ENCODE measurements at regions of chr11 and their contacts with region 1.

Region 1: DNA sequence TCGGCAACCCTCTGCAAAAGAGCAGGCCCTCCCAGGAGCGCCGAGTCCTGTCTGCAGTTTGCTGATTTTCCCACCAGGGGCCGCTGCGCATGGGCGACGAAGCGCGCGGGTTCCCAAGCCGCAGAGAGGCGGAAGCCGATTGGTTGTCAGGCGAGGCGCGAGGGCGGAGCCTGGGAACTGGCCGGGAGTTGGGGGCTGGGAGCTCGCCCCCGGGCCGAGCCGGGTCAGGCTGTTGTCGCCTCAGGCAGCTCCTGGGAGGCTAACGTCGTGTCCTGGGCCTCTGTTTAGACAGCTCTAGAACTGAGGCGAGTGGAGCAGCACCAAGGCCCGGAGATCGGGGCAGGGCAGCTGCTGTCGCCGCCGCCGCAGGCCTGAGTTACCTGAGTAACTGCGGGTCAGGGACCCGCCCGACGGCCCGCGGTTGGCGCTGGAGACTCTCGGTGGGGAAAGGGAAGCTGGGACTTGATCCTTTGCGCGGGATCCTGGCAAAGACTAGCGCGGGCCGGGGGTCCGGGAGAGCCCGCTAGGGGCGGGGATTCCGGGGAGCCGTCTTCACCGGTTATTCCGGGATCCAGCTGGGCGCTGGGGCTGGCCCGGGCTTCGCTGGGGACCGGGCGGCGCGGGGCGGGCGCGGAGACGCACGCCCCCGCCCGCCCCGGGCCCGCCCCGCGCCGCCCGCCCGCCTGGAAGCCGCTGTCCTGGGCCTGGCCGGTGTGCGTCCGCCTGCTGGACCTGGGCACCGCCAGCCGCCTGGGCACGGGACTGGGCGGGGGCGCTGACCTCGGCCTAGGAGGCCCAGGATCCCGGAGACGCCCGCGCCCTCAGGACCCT is at the start of gene STIM1:
- DNase-seq: peak; percentile 88
- ATAC-seq: peak; percentile 96
- H3K4me3 ChIP-seq: peak within 1 kb of the TSS; percentile 67 to 86
- H3K27ac ChIP-seq: peak within 1 kb of the TSS; percentile 87
- H3K4me1 ChIP-seq: peaks cover 42% of the 10 kb centered on the region
- H3K27me3 ChIP-seq: no peaks in the 10 kb centered on the region
- CTCF ChIP-seq: peak; percentile 100
- total RNA-seq, gene STIM1: 93.6 TPM

Region 2: GRCh38 chr11:3123761-3124733 is 731.1 kb before region 1 on chr11:
- CTCF ChIA-PET with region 1: no interaction called
- POLR2A ChIA-PET with region 1: no interaction called
- in situ Hi-C with region 1: no loop called
- intact Hi-C with region 1: no loop called
- DNase-seq: peak; percentile 76
- ATAC-seq: peak; percentile 72
- H3K4me3 ChIP-seq: no peak overlapping the region
- H3K27ac ChIP-seq: no peak overlapping the region
- H3K4me1 ChIP-seq: no peaks in the 10 kb centered on the region
- H3K27me3 ChIP-seq: no peaks in the 10 kb centered on the region
- CTCF ChIP-seq: no peak

Region 3: DNA sequence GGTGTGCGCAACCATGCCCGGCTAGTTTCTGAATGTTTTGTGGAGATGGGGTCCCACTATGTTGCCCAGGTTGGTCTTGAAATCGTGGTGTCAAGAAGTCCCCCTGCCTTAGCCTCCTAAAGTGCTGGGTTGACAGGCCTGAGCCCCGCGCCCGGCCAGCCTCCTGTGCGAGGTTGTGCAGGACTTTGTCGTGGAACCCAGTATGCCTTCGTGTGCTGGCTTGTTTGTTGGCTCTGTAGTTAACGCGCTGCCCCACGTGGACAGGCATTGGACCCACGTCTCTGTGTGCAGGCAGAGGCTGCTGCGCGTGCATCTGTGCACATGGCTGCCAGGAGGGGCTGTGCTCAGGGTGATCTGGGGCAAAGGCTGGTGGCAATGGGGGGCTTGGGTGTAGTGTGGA is 442.4 kb before region 1 on chr11:
- CTCF ChIA-PET with region 1: interaction called, 13 read pairs
- POLR2A ChIA-PET with region 1: no interaction called
- in situ Hi-C with region 1: no loop called
- intact Hi-C with region 1: loop called (anchors 10 kb)
- DNase-seq: no peak
- ATAC-seq: no peak
- H3K4me3 ChIP-seq: no peak overlapping the region
- H3K27ac ChIP-seq: no peak overlapping the region
- H3K4me1 ChIP-seq: no peaks in the 10 kb centered on the region
- H3K27me3 ChIP-seq: no peaks in the 10 kb centered on the region
- CTCF ChIP-seq: no peak

Region 4: DNA sequence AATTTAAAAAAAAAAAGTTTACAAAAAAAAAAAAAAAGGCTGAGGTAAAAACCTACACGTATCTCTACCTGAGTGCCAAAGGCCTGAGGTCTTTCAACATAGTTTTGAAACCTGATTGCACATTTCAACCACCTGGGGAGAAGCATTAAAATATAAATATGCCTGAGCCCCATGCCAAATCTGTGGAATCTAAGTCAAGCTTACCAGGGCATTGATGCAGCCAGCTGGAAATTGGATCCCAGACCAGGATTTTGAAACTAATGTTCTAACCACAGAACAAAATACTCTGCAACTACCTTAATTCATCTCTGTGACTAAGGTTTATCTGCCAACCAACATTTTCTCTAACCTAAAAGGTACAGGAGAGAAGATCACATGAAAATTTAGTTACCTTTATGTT is 145.2 kb before region 1 on chr11:
- CTCF ChIA-PET with region 1: no interaction called
- POLR2A ChIA-PET with region 1: no interaction called
- in situ Hi-C with region 1: no loop called
- intact Hi-C with region 1: no loop called
- DNase-seq: no peak
- ATAC-seq: no peak
- H3K4me3 ChIP-seq: no peak overlapping the region
- H3K27ac ChIP-seq: no peak overlapping the region
- H3K4me1 ChIP-seq: no peaks in the 10 kb centered on the region
- H3K27me3 ChIP-seq: no peaks in the 10 kb centered on the region
- CTCF ChIP-seq: no peak

Region 5: GRCh38 chr11:3732671-3733436 is 122.3 kb before region 1 on chr11:
- CTCF ChIA-PET with region 1: no interaction called
- POLR2A ChIA-PET with region 1: no interaction called
- in situ Hi-C with region 1: no loop called
- intact Hi-C with region 1: no loop called
- DNase-seq: no peak
- ATAC-seq: no peak
- H3K4me3 ChIP-seq: no peak overlapping the region
- H3K27ac ChIP-seq: no peak overlapping the region
- H3K4me1 ChIP-seq: no peaks in the 10 kb centered on the region
- H3K27me3 ChIP-seq: no peaks in the 10 kb centered on the region
- CTCF ChIP-seq: no peak

Region 6: GRCh38 chr11:3841426-3842350 is 13.5 kb before region 1 on chr11:
- CTCF ChIA-PET with region 1: interaction called, 33 read pairs
- POLR2A ChIA-PET with region 1: interaction called, 6 read pairs
- in situ Hi-C with region 1: no loop called
- intact Hi-C with region 1: no loop called
- DNase-seq: peak; percentile 82
- ATAC-seq: peak; percentile 84
- H3K4me3 ChIP-seq: peak overlapping the region; percentile 62 to 63
- H3K27ac ChIP-seq: peak overlapping the region; percentile 84
- H3K4me1 ChIP-seq: peaks cover 36% of the 10 kb centered on the region
- H3K27me3 ChIP-seq: no peaks in the 10 kb centered on the region
- CTCF ChIP-seq: peak; percentile 100

Region 7: DNA sequence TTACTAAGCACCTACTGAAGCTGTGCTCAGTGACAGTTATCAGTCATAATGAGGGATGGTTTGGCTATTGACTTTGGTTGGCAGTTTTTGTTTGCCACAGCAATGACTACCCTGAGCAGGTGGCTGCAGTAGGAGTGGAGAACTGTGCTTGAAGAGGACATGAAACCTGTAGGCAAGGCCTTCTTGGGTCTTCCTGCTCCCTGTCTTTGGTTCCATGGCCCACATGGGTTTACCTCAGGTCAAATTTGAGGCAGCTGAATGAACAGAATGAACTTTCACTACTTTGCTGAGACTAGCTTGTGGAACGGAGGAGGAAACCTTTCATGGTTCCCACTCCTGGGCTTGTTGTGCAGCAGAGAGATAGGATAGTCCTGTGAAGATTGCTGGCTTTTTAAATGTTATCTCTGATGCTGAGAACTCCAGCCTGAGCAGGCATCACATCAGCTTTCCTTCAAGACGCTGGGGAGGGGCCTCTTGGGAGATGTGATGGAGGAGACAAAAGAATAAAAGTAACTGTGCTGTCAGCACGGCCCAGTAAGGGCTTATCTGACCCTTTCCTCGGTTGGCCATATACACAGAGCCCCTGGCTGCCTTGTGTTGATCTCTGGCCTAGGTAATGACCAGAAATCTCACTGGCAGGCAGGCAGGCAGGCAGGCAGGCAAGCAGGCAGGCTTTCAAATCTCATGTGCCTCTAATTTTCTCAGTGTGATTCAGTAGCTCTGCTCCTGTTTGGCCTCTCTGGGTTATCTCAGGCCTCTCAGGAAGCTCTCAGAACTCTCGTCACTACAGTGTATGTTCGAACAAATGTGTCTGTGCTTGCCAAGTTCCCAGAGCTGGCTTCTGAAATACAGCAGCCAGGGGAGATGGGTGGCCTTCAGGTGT is 12.3 kb after region 1 on chr11:
- CTCF ChIA-PET with region 1: interaction called, 9 read pairs
- POLR2A ChIA-PET with region 1: interaction called, 17 read pairs
- in situ Hi-C with region 1: no loop called
- intact Hi-C with region 1: no loop called
- DNase-seq: no peak
- ATAC-seq: peak; percentile 15; the same call in 1 of the 2 replicates
- H3K4me3 ChIP-seq: no peak overlapping the region
- H3K27ac ChIP-seq: peak overlapping the region; percentile 4; the same call in 1 of the 2 replicates
- H3K4me1 ChIP-seq: peaks cover 25% of the 10 kb centered on the region
- H3K27me3 ChIP-seq: no peaks in the 10 kb centered on the region
- CTCF ChIP-seq: no peak

Region 8: GRCh38 chr11:3873712-3874349 is 18.6 kb after region 1 on chr11:
- CTCF ChIA-PET with region 1: interaction called, 10 read pairs
- POLR2A ChIA-PET with region 1: interaction called, 17 read pairs
- in situ Hi-C with region 1: no loop called
- intact Hi-C with region 1: no loop called
- DNase-seq: no peak
- ATAC-seq: peak; percentile 31; the same call in 1 of the 2 replicates
- H3K4me3 ChIP-seq: no peak overlapping the region
- H3K27ac ChIP-seq: no peak overlapping the region
- H3K4me1 ChIP-seq: peaks cover 17% of the 10 kb centered on the region
- H3K27me3 ChIP-seq: no peaks in the 10 kb centered on the region
- CTCF ChIP-seq: no peak

Region 9: GRCh38 chr11:3984896-3985295 is 129.7 kb after region 1 on chr11:
- CTCF ChIA-PET with region 1: no interaction called
- POLR2A ChIA-PET with region 1: no interaction called
- in situ Hi-C with region 1: no loop called
- intact Hi-C with region 1: no loop called
- DNase-seq: no peak
- ATAC-seq: no peak
- H3K4me3 ChIP-seq: no peak overlapping the region
- H3K27ac ChIP-seq: no peak overlapping the region
- H3K4me1 ChIP-seq: no peaks in the 10 kb centered on the region
- H3K27me3 ChIP-seq: no peaks in the 10 kb centered on the region
- CTCF ChIP-seq: peak; percentile 15; the same call in 1 of the 2 replicates

Region 10: DNA sequence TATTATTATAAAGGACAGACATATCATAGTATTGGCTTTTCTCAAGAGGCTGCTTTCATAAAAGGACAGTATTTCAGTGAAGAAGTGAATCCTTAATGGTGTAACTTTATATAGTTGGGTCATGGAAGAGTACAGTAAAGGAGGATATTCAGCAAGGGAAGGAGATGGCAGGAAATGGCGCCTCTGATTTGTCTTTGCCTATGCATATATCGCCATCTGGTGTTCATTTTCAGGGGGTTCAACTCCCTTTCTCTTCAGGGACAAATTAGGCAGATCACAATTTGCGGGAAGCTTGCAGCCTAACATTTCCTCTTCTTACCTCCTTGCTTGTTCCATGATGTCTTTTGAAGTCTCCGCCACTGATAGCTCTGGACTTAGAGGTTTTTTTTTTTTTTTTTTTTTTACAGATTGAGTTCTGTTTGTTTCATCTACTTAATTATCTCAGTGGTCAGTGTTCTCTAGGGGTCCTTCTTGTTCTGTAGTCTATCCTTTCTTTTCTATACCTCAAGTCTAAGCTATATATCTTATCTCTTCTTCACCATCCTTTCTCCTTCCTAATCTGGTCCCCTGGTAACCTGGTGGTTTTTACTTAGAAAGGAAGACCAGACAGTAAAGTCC is 217.6 kb after region 1 on chr11:
- CTCF ChIA-PET with region 1: interaction called, 139 read pairs
- POLR2A ChIA-PET with region 1: no interaction called
- in situ Hi-C with region 1: no loop called
- intact Hi-C with region 1: no loop called
- DNase-seq: peak; percentile 73
- ATAC-seq: peak; percentile 95
- H3K4me3 ChIP-seq: no peak overlapping the region
- H3K27ac ChIP-seq: no peak overlapping the region
- H3K4me1 ChIP-seq: no peaks in the 10 kb centered on the region
- H3K27me3 ChIP-seq: no peaks in the 10 kb centered on the region
- CTCF ChIP-seq: peak; percentile 90

Measured in Panc1 (cell line).